Panc1 (cell line): ENCODE measurements at regions of chr6 and their contacts with region 1.

Region 1: DNA sequence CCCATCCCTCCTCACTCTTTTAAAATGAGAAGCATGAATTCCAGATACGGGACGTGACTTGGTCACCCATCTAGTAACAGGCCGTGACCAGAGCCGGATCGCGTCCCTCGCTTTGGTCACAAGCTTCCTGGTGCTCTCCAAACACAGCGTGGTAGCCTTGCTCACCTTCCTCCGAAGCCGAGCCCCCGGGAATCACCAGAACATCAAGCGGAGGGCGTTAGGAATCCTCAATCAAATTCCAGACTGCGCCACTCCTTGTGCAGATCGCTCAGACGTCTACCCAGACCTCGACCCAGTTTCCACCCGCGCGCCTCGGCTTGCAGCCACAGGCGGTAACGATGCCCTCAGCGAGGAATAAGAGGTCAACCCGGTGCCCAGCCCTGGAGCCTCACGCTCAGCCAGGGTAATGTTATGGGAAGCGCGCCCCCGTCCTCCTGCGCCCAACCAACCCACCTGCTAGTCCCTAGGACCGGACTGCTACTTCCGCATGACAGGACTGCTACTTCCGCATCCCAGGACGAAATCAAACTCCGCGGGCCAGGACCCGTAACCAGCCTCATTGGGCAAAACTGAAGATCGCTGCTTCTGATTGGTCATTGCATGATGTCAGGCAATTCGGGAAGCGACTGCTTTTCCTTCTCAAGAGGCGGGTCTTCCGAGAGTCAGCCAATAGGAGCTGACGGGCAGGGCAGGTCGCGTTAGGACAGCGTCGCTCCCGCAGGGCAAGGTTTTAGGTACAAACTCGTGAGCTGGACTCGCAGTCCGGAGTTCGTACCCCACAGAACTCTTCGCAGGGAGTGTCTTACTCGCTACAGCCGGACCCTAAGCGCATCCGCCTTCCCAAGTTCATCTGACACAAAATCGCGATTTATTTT is at the start of gene MTFR2:
- DNase-seq: peak; percentile 97
- ATAC-seq: peak; percentile 95
- H3K4me3 ChIP-seq: peak within 1 kb of the TSS; percentile 83 to 93
- H3K27ac ChIP-seq: peak within 1 kb of the TSS; percentile 92
- H3K4me1 ChIP-seq: peaks cover 17% of the 10 kb centered on the region
- H3K27me3 ChIP-seq: no peaks in the 10 kb centered on the region
- CTCF ChIP-seq: no peak
- total RNA-seq, gene MTFR2: 12.8 TPM

Region 2: GRCh38 chr6:135481783-135482369 is 768.2 kb before region 1 on chr6:
- CTCF ChIA-PET with region 1: no interaction called
- POLR2A ChIA-PET with region 1: interaction called, 10 read pairs
- in situ Hi-C with region 1: no loop called
- intact Hi-C with region 1: no loop called
- DNase-seq: no peak
- ATAC-seq: no peak
- H3K4me3 ChIP-seq: no peak overlapping the region
- H3K27ac ChIP-seq: no peak overlapping the region
- H3K4me1 ChIP-seq: no peaks in the 10 kb centered on the region
- H3K27me3 ChIP-seq: no peaks in the 10 kb centered on the region
- CTCF ChIP-seq: no peak

Region 3: GRCh38 chr6:136262940-136263339 is 12.9 kb after region 1 on chr6:
- CTCF ChIA-PET with region 1: no interaction called
- POLR2A ChIA-PET with region 1: interaction called, 10 read pairs
- in situ Hi-C with region 1: no loop called
- intact Hi-C with region 1: no loop called
- DNase-seq: no peak
- ATAC-seq: no peak
- H3K4me3 ChIP-seq: no peak overlapping the region
- H3K27ac ChIP-seq: no peak overlapping the region
- H3K4me1 ChIP-seq: no peaks in the 10 kb centered on the region
- H3K27me3 ChIP-seq: no peaks in the 10 kb centered on the region
- CTCF ChIP-seq: no peak

Region 4: GRCh38 chr6:136274062-136274461 is 24.0 kb after region 1 on chr6:
- CTCF ChIA-PET with region 1: no interaction called
- POLR2A ChIA-PET with region 1: no interaction called
- in situ Hi-C with region 1: no loop called
- intact Hi-C with region 1: no loop called
- DNase-seq: no peak
- ATAC-seq: no peak
- H3K4me3 ChIP-seq: no peak overlapping the region
- H3K27ac ChIP-seq: no peak overlapping the region
- H3K4me1 ChIP-seq: no peaks in the 10 kb centered on the region
- H3K27me3 ChIP-seq: no peaks in the 10 kb centered on the region
- CTCF ChIP-seq: no peak

Region 5: DNA sequence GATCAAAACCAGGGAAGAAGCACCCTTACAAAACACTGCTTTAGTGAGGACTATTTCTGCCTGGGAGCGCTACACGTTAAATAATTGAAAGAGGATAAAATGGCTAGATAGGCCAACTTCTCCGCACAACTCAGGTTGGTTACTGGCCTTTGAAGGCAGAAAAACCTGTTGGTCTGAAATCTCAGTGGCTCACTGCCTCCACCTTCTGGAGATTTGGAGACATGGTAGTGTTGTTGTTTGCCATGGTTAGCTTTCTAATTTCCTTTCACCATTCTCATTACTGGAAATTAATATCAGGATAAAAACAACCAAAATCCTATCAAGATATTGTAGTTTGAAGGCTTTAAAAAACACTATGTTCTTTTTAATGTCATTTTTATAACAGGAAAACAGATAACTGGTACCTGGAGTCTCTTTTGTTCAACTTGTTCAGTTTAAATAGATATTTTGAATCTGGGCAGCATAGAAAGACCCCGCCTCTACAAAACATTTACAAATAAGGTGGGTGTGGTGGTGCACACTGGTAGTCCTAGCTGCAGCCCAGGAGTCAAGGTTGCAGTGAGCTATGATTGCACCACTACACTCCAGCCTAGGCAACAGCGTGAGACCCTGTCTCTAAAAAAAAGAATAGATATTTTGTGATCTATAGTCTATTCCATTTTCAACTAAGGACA is 67.1 kb after region 1 on chr6:
- CTCF ChIA-PET with region 1: interaction called, 3 read pairs
- POLR2A ChIA-PET with region 1: no interaction called
- in situ Hi-C with region 1: no loop called
- intact Hi-C with region 1: loop called (anchors 5 kb)
- DNase-seq: peak; percentile 55
- ATAC-seq: peak; percentile 83
- H3K4me3 ChIP-seq: no peak overlapping the region
- H3K27ac ChIP-seq: no peak overlapping the region
- H3K4me1 ChIP-seq: no peaks in the 10 kb centered on the region
- H3K27me3 ChIP-seq: peaks cover 3% of the 10 kb centered on the region; the same call in 1 of the 2 replicates
- CTCF ChIP-seq: peak; percentile 87